Activated T-helper 2 cell treated with anti-CD3 and anti-CD28 coated beads, Interferon-gamma antibody, Interleukin-2, Interleukin-4, amounts not matched to agents 10 μg/mL and 5 μg/mL and 100 μg/mL, durations not matched to agents 14 hours and 24 hours and 36 hours (primary cell): ENCODE measurements at regions of chr5 and their contacts with region 1.

Region 1: GRCh38 chr5:170253844-170254455 is 21.2 kb downstream of the C5orf58 start:
- DNase-seq: peak; percentile 58
- H3K4me3 Mint-ChIP-seq: no peak overlapping the region
- H3K27ac Mint-ChIP-seq: peak overlapping the region; percentile 69
- H3K4me1 Mint-ChIP-seq: peaks cover 37% of the 10 kb centered on the region
- H3K27me3 Mint-ChIP-seq: no peaks in the 10 kb centered on the region

Region 2: DNA sequence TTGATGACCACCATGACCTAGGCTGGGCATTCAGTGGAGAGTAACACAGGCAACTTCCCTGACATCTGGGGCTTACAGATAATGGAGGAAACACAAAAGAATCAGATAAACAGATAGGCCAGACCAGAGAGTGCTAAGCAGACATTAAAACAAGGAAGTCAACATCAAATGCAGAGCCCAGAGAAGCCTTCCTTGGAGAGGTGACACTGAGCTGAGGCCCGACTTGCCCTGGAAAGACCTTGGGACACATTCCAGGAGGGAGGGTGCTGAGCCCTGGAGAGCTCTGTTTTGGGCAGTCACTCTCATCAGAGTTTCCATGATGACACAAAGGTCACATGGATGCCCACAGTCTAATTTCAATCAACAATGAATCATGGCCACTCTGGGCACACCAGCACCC is 53.1 kb before region 1 on chr5:
- intact Hi-C with region 1: no loop called
- DNase-seq: no peak
- H3K4me3 Mint-ChIP-seq: no peak overlapping the region
- H3K27ac Mint-ChIP-seq: no peak overlapping the region
- H3K4me1 Mint-ChIP-seq: no peaks in the 10 kb centered on the region
- H3K27me3 Mint-ChIP-seq: peaks cover 5% of the 10 kb centered on the region

Region 3: GRCh38 chr5:170238456-170239196 is 15.3 kb before region 1 on chr5:
- intact Hi-C with region 1: loop called (anchors 1 kb)
- DNase-seq: no peak
- H3K4me3 Mint-ChIP-seq: no peak overlapping the region
- H3K27ac Mint-ChIP-seq: no peak overlapping the region
- H3K4me1 Mint-ChIP-seq: peaks cover 8% of the 10 kb centered on the region
- H3K27me3 Mint-ChIP-seq: no peaks in the 10 kb centered on the region